Calu3 (cell line): ENCODE measurements at regions of chr6 and their contacts with region 1.

Region 1: GRCh38 chr6:147506704-147507114 is 1.8 kb upstream of the SAMD5 start:
- DNase-seq: peak; percentile 74
- H3K4me3 Mint-ChIP-seq: peak overlapping the region; percentile 89
- H3K27ac Mint-ChIP-seq: no peak overlapping the region
- H3K4me1 Mint-ChIP-seq: peaks cover 19% of the 10 kb centered on the region
- H3K27me3 Mint-ChIP-seq: peaks cover 27% of the 10 kb centered on the region
- CTCF ChIP-seq: peak; percentile 57

Region 2: DNA sequence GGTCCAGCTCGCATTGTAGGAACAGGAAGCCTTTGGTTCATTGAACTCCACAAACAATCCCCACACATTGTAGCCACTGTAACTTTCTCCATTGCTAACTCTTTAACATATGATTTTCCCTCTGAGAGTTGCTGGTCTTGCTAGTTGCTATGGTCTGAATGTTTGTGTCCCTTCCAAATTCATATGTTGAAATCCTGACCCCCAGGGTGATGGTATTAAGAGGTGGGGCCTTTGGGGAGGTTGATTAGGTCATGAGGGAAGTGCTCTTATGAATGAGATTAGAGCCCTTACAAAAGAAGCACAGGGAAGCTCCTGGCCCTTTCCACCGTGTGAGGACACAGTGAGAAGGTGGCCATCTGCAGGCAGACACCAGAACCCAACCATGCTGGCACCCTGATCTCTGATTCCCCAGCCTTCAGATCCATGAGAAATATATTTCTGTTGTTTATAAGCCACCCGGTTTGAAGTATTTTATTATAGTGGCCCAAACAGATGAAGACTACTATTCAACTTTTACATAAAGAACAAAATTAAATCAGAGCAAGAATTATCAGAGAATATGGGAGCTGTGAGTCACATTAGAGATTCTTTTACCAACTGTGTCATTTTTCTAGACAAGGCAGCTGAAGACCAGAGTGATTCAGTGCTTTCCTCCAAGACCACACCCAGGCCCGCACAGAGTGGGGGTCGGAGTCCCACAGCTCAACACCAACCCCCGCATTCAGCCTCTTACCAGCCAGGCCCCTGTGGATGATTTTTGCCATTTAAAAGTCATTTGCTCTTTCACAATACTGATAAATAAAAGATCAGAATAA is 144.7 kb after region 1 on chr6:
- CTCF ChIA-PET with region 1: no interaction called
- intact Hi-C with region 1: no loop called
- DNase-seq: no peak
- H3K4me3 Mint-ChIP-seq: no peak overlapping the region
- H3K27ac Mint-ChIP-seq: no peak overlapping the region
- H3K4me1 Mint-ChIP-seq: no peaks in the 10 kb centered on the region
- H3K27me3 Mint-ChIP-seq: no peaks in the 10 kb centered on the region
- CTCF ChIP-seq: no peak

Region 3: GRCh38 chr6:147970975-147971374 is 464.3 kb after region 1 on chr6:
- CTCF ChIA-PET with region 1: no interaction called
- intact Hi-C with region 1: loop called (anchors 10 kb)
- DNase-seq: no peak
- H3K4me3 Mint-ChIP-seq: no peak overlapping the region
- H3K27ac Mint-ChIP-seq: no peak overlapping the region
- H3K4me1 Mint-ChIP-seq: no peaks in the 10 kb centered on the region
- H3K27me3 Mint-ChIP-seq: no peaks in the 10 kb centered on the region
- CTCF ChIP-seq: no peak

Region 4: GRCh38 chr6:148166339-148166968 is 659.7 kb after region 1 on chr6:
- CTCF ChIA-PET with region 1: no interaction called
- intact Hi-C with region 1: loop called (anchors 1 kb)
- DNase-seq: no peak
- H3K4me3 Mint-ChIP-seq: no peak overlapping the region
- H3K27ac Mint-ChIP-seq: no peak overlapping the region
- H3K4me1 Mint-ChIP-seq: no peaks in the 10 kb centered on the region
- H3K27me3 Mint-ChIP-seq: no peaks in the 10 kb centered on the region
- CTCF ChIP-seq: no peak

Region 5: GRCh38 chr6:148250975-148251685 is 744.4 kb after region 1 on chr6:
- CTCF ChIA-PET with region 1: no interaction called
- intact Hi-C with region 1: loop called (anchors 2 kb)
- DNase-seq: no peak
- H3K4me3 Mint-ChIP-seq: no peak overlapping the region
- H3K27ac Mint-ChIP-seq: no peak overlapping the region
- H3K4me1 Mint-ChIP-seq: no peaks in the 10 kb centered on the region
- H3K27me3 Mint-ChIP-seq: no peaks in the 10 kb centered on the region
- CTCF ChIP-seq: no peak

Region 6: GRCh38 chr6:148464319-148465010 is 957.8 kb after region 1 on chr6:
- CTCF ChIA-PET with region 1: no interaction called
- intact Hi-C with region 1: loop called (anchors 10 kb)
- DNase-seq: peak; percentile 59
- H3K4me3 Mint-ChIP-seq: no peak overlapping the region
- H3K27ac Mint-ChIP-seq: no peak overlapping the region
- H3K4me1 Mint-ChIP-seq: peaks cover 24% of the 10 kb centered on the region
- H3K27me3 Mint-ChIP-seq: no peaks in the 10 kb centered on the region
- CTCF ChIP-seq: peak; percentile 74